ENCODE measurements at regions of chr15 and their contacts with region 1.

Region 1: GRCh38 chr15:33310481-33311311 is at the start of gene RYR3:
- DNase-seq: no peak
- ATAC-seq: 0 out of 2 replicates have a peak, but pooled peaks have one; percentile 15
- H3K4me3 ChIP-seq: no peak within 1 kb of the TSS
- H3K27ac ChIP-seq: no peak within 1 kb of the TSS
- H3K4me1 ChIP-seq: no peaks in the 10 kb centered on the region
- H3K27me3 ChIP-seq: peaks cover 9% of the 10 kb centered on the region
- CTCF ChIP-seq: no peak
- total RNA-seq, gene RYR3: not detected

Region 2: DNA sequence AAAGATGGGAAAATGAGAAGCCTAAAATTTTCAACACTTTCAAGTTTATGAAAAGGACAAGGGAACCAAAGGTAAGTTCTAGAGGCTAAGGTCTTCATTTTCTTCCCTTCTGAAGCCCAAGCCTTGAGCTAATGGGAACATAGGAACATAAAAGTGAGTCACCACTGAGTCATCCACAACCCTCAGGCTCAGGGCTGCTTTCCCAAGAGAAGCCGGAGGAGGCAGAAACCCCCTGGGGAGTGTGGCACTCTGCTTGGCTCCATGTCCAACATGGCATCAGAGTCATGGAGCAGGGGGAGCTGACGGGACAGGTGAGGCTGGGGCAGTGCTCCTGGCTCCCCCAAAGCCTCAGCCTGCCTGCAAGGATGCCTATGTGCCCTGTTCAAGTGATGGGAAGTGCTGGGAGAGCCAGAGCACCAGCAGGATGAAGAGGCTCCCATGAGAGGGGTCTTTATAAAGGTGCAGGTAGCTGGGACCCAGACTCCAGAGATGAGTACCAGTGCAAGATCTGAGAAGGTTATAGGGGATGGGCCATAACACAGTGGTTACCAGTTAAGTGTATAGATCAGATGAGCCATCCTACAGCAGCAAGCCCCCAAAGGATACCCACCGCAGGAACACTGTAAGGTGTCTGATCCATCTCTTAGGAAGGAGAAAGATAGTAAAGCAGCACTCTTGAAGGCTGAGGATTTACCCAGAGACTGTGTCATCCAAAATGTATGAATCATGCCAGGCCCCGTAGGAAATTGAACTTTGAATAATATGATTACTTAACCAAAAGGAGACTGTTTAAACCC is 31.7 kb before region 1 on chr15:
- CTCF ChIA-PET with region 1: no interaction called
- POLR2A ChIA-PET with region 1: no interaction called
- in situ Hi-C with region 1: no loop called
- intact Hi-C with region 1: no loop called
- DNase-seq: peak; percentile 57
- ATAC-seq: peak; percentile 99
- H3K4me3 ChIP-seq: no peak overlapping the region
- H3K27ac ChIP-seq: peak overlapping the region; percentile 45; the same call in 1 of the 2 replicates
- H3K4me1 ChIP-seq: peaks cover 16% of the 10 kb centered on the region
- H3K27me3 ChIP-seq: no peaks in the 10 kb centered on the region
- CTCF ChIP-seq: no peak

Region 3: GRCh38 chr15:33341953-33342352 is 31.3 kb after region 1 on chr15:
- CTCF ChIA-PET with region 1: no interaction called
- POLR2A ChIA-PET with region 1: interaction called, 18 read pairs
- in situ Hi-C with region 1: no loop called
- intact Hi-C with region 1: no loop called
- DNase-seq: no peak
- ATAC-seq: no peak
- H3K4me3 ChIP-seq: no peak overlapping the region
- H3K27ac ChIP-seq: no peak overlapping the region
- H3K4me1 ChIP-seq: no peaks in the 10 kb centered on the region
- H3K27me3 ChIP-seq: peaks cover 2% of the 10 kb centered on the region; the same call in 1 of the 2 replicates
- CTCF ChIP-seq: no peak

Measured in Panc1 (cell line).